CD8-positive, alpha-beta T cell (primary cell): ENCODE measurements at regions of chr7 and their contacts with region 1.

Region 1: DNA sequence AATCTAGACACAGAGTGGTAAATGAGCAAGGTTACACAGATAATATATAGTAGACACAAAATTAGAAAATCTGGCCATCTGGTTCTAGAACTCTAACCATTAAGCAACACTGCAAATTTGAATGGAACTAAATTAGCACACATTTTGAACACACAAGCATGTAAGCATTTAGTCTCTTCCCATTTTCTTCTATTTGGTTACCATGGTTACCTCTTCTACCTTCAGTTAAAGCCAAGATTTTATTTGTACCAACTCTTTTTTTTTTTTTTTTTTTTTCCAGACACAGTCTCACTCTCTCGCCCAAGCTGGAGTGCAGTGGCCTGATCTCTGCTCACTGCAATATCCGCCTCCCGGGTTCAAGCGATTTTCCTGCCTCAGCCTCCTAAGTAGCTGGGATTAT is 790.5 kb downstream of the MAGI2 start:
- DNase-seq: no peak
- ATAC-seq: no peak
- H3K4me3 ChIP-seq: no peak overlapping the region
- H3K4me3 Mint-ChIP-seq: no peak overlapping the region
- H3K27ac ChIP-seq: no peak overlapping the region
- H3K27ac Mint-ChIP-seq: no peak overlapping the region
- H3K4me1 ChIP-seq: no peaks in the 10 kb centered on the region
- H3K4me1 Mint-ChIP-seq: no peaks in the 10 kb centered on the region
- H3K27me3 ChIP-seq: no peaks in the 10 kb centered on the region
- H3K27me3 Mint-ChIP-seq: no peaks in the 10 kb centered on the region
- CTCF ChIP-seq: no peak

Region 2: GRCh38 chr7:79570904-79571303 is 908.0 kb after region 1 on chr7:
- CTCF ChIA-PET with region 1: no interaction called
- POLR2A ChIA-PET with region 1: no interaction called
- intact Hi-C with region 1: loop called in 1 of 2 experiments (anchors 5 kb)
- DNase-seq: no peak
- ATAC-seq: no peak
- H3K4me3 ChIP-seq: no peak overlapping the region
- H3K4me3 Mint-ChIP-seq: no peak overlapping the region
- H3K27ac ChIP-seq: no peak overlapping the region
- H3K27ac Mint-ChIP-seq: no peak overlapping the region
- H3K4me1 ChIP-seq: no peaks in the 10 kb centered on the region
- H3K4me1 Mint-ChIP-seq: no peaks in the 10 kb centered on the region
- H3K27me3 ChIP-seq: no peaks in the 10 kb centered on the region
- H3K27me3 Mint-ChIP-seq: peaks cover 2% of the 10 kb centered on the region
- CTCF ChIP-seq: no peak